OCI-LY7 (cell line): ENCODE measurements at regions of chr14 and their contacts with region 1.

Region 1: GRCh38 chr14:32076278-32077080 is 625 bp upstream of the ARHGAP5 start:
- DNase-seq: peak; percentile 59
- H3K4me3 ChIP-seq: peak overlapping the region; percentile 84
- H3K27ac ChIP-seq: no peak overlapping the region
- H3K4me1 ChIP-seq: peaks cover 11% of the 10 kb centered on the region
- CTCF ChIP-seq: no peak

Region 2: DNA sequence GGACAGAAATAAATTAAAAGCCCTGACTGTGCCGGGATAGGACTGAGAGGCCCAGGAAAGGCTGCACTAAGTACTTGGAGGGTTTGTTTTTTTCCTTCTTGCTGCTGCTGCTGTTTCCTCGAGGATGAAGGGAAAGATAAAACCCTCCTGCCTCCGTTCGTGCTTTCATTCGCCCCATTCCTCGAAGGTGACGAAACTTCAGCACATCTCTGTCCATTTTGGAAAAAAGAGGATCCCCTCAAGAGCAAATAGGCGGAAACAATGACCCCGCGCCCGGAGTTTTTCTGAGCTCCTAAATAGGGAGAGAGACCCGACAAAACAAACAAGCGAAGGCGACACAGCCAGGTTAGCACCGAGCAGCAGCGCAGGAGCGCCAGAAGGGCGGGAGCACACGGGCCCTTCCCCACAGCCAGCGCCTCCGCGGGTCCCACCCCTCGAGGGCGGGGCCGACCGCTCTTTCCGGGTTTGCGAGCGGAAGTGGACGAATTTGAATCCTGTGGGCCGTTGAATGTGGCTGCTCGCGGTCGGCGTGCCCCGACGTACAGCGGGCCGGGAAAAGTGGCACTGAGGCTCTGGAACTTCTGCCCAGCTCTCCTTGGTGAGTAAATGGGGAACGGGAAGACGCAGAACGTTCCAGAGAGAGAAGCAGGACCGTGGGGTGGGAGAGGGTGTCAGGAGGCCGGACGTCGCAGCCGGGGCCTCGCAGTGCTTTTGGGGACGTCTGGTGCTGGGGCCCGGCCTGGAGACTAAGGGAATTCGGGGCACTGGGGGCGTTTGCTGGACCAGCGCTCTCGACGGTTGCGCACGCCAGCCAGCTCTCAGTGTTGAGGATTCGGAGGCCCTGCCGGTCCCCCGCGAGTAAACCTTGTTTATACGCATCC is 1517.6 kb before region 1 on chr14 and contains the start of gene G2E3:
- CTCF ChIA-PET with region 1: no interaction called
- POLR2A ChIA-PET with region 1: no interaction called
- intact Hi-C with region 1: loop called (anchors 10 kb)
- DNase-seq: peak; percentile 92
- H3K4me3 ChIP-seq: peak within 1 kb of the TSS; percentile 91
- H3K27ac ChIP-seq: peak within 1 kb of the TSS; percentile 73
- H3K4me1 ChIP-seq: peaks cover 20% of the 10 kb centered on the region
- CTCF ChIP-seq: no peak
- total RNA-seq, gene G2E3: 22.3 and 22.7 TPM in 2 replicates

Region 3: DNA sequence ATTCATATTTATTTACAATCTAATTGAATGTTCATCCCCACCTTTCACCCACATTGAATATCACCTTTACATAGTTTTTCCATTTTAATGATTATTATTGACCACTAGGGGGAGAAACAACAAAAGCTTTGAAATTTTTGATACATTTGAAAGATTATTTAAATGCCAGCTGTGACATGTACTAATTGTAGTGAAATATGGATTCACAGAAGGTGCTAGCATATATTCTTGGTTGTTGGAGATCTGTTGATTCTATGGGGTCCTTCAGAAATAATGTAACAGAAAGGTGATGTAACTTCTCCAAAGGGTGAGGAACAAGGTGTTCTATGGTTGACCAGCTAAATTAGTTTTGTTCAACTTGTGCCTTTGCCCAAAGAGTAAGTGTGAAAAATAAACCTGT is 566.3 kb before region 1 on chr14:
- CTCF ChIA-PET with region 1: no interaction called
- POLR2A ChIA-PET with region 1: no interaction called
- intact Hi-C with region 1: loop called (anchors 5 kb)
- DNase-seq: peak; percentile 39
- H3K4me3 ChIP-seq: no peak overlapping the region
- H3K27ac ChIP-seq: no peak overlapping the region
- H3K4me1 ChIP-seq: no peaks in the 10 kb centered on the region
- CTCF ChIP-seq: peak; percentile 87

Region 4: GRCh38 chr14:31561155-31561846 is 515.2 kb before region 1 on chr14 and contains the start of gene NUBPL:
- CTCF ChIA-PET with region 1: no interaction called
- POLR2A ChIA-PET with region 1: no interaction called
- intact Hi-C with region 1: loop called (anchors 5 kb)
- DNase-seq: peak; percentile 95
- H3K4me3 ChIP-seq: peak within 1 kb of the TSS; percentile 87
- H3K27ac ChIP-seq: peak within 1 kb of the TSS; percentile 38
- H3K4me1 ChIP-seq: peaks cover 5% of the 10 kb centered on the region
- CTCF ChIP-seq: no peak
- total RNA-seq, gene NUBPL: 9.0 and 15.1 TPM in 2 replicates

Region 5: DNA sequence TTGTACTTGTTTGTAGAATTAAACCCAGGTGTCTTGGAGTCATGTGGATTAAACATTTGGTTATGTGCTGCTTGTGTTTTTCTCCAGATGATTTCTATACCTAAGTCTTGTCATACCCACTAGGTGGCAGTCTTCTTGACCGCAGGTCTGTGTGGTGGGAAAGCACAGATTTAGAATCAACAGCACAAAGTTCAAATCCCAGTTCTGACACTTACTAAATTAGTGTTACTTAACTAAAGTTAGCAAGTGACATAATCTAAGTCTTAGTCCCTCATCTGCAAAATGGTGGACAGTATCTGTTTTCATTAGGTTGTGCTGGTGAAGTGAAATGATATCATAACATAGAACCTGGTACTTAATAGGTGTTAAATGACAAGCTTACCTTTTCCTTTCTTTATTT is 150.4 kb before region 1 on chr14:
- CTCF ChIA-PET with region 1: no interaction called
- POLR2A ChIA-PET with region 1: no interaction called
- intact Hi-C with region 1: loop called (anchors 10 kb)
- DNase-seq: peak; percentile 65
- H3K4me3 ChIP-seq: no peak overlapping the region
- H3K27ac ChIP-seq: no peak overlapping the region
- H3K4me1 ChIP-seq: no peaks in the 10 kb centered on the region
- CTCF ChIP-seq: peak; percentile 91

Region 6: GRCh38 chr14:31962920-31963319 is 113.6 kb before region 1 on chr14:
- CTCF ChIA-PET with region 1: interaction called, 11 read pairs
- POLR2A ChIA-PET with region 1: no interaction called
- intact Hi-C with region 1: no loop called
- DNase-seq: no peak
- H3K4me3 ChIP-seq: no peak overlapping the region
- H3K27ac ChIP-seq: no peak overlapping the region
- H3K4me1 ChIP-seq: no peaks in the 10 kb centered on the region
- CTCF ChIP-seq: no peak

Region 7: GRCh38 chr14:32252030-32252670 is 175.7 kb after region 1 on chr14:
- CTCF ChIA-PET with region 1: interaction called, 3 read pairs
- POLR2A ChIA-PET with region 1: interaction called, 3 read pairs
- intact Hi-C with region 1: loop called (anchors 1 kb)
- DNase-seq: peak; percentile 79
- H3K4me3 ChIP-seq: no peak overlapping the region
- H3K27ac ChIP-seq: no peak overlapping the region
- H3K4me1 ChIP-seq: no peaks in the 10 kb centered on the region
- CTCF ChIP-seq: peak; percentile 95